ENCODE measurements at regions of chr2 and their contacts with region 1.

Region 1: GRCh38 chr2:138501425-138502283 is at the start of gene SPOPL:
- DNase-seq: peak; percentile 90 to 95
- ATAC-seq: peak; percentile 94 to 100 (median 98)
- H3K4me3 ChIP-seq: peak within 1 kb of the TSS; percentile 79 to 98 (median 92)
- H3K27ac ChIP-seq: peak within 1 kb of the TSS; percentile 79 to 97 (median 92)
- H3K4me1 ChIP-seq: peaks cover 0 to 62% (median 44%) of the 10 kb centered on the region in 9 donors
- H3K27me3 ChIP-seq: no peaks in the 10 kb centered on the region
- CTCF ChIP-seq: peak; percentile 20 to 60 (median 40)
- total RNA-seq, gene SPOPL: 10.0 to 19.9 (median 14.6) TPM

Region 2: GRCh38 chr2:138559641-138560040 is 58.0 kb after region 1 on chr2:
- intact Hi-C with region 1: loop called in 2 of 10 experiments (anchors 10 kb)
- DNase-seq: no peak
- ATAC-seq: no peak
- H3K4me3 ChIP-seq: no peak overlapping the region
- H3K27ac ChIP-seq: no peak overlapping the region
- H3K4me1 ChIP-seq: peaks cover 0 to 10% (median 0%) of the 10 kb centered on the region in 9 donors
- H3K27me3 ChIP-seq: no peaks in the 10 kb centered on the region
- CTCF ChIP-seq: no peak

Region 3: DNA sequence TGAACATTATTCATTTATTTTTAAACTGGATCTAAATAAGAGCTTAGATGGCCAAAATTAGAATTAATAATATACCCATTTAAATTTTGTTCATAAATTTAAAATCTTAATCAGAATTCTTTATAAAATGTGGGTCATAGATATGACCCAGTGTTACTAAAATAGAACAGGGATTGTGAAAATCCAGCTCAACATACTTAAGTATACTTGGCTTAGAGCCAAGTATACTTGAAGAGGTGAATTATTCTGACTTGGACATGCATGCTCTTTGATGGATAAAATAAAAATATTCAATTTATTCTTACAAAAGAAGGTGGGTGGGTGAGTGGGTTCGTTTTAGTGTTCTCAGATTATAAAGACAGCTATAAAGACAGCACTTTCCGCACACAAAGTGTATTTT is 70.7 kb after region 1 on chr2:
- intact Hi-C with region 1: loop called in 1 of 10 experiments (anchors 2 kb)
- DNase-seq: no peak
- ATAC-seq: no peak
- H3K4me3 ChIP-seq: no peak overlapping the region
- H3K27ac ChIP-seq: no peak overlapping the region
- H3K4me1 ChIP-seq: peaks cover 0 to 8% (median 0%) of the 10 kb centered on the region in 9 donors
- H3K27me3 ChIP-seq: no peaks in the 10 kb centered on the region
- CTCF ChIP-seq: no peak

Region 4: GRCh38 chr2:138707392-138708074 is 205.9 kb after region 1 on chr2:
- intact Hi-C with region 1: loop called in 1 of 10 experiments (anchors 5 kb)
- DNase-seq: no peak
- ATAC-seq: peak in 7 of 8 donors; percentile 38 to 93 (median 79)
- H3K4me3 ChIP-seq: no peak overlapping the region
- H3K27ac ChIP-seq: peak overlapping the region in 8 of 10 donors; percentile 1 to 71 (median 26)
- H3K4me1 ChIP-seq: peaks cover 0 to 32% (median 19%) of the 10 kb centered on the region in 9 donors
- H3K27me3 ChIP-seq: no peaks in the 10 kb centered on the region
- CTCF ChIP-seq: no peak

Measured in heart right ventricle (tissue), 16 donors.